Vagina (tissue), 2 donors: ENCODE measurements at regions of chr1 and their contacts with region 1.

Region 1: GRCh38 chr1:35451125-35451528 is 106.1 kb downstream of the KIAA0319L start:
- DNase-seq: no peak
- H3K4me3 ChIP-seq: no peak overlapping the region
- H3K27ac ChIP-seq: peak overlapping the region; percentile 76
- H3K4me1 ChIP-seq: peaks cover 48% of the 10 kb centered on the region
- H3K27me3 ChIP-seq: no peaks in the 10 kb centered on the region
- CTCF ChIP-seq: peak; percentile 76 to 91 (median 90)
- POLR2A ChIP-seq: no peak

Region 2: DNA sequence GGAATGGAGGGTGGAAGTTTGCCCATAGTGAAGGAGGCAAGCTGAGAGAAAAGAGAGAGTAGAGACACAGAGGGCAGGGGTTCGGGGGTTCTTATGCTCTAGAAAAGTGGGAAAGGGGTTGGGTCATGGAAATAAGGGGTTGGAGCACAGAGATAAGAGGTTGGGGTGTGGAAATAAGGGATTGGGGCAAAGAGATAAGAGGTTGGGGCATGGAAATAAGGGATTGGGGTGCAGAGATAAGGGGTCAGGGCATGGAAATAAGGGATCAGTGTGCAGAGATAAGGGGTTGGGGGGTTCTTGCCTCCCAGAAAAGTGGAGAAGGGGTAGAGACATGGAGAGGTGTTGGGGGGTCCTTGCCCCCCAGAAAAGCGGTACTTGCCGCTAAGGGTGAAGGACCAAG is 314.3 kb before region 1 on chr1:
- intact Hi-C with region 1: no loop called
- DNase-seq: no peak
- H3K4me3 ChIP-seq: no peak overlapping the region
- H3K27ac ChIP-seq: no peak overlapping the region
- H3K4me1 ChIP-seq: no peaks in the 10 kb centered on the region
- H3K27me3 ChIP-seq: no peaks in the 10 kb centered on the region
- CTCF ChIP-seq: no peak
- POLR2A ChIP-seq: no peak

Region 3: GRCh38 chr1:35726450-35727433 is 275.6 kb after region 1 on chr1:
- intact Hi-C with region 1: loop called (anchors 10 kb)
- DNase-seq: no peak
- H3K4me3 ChIP-seq: no peak overlapping the region
- H3K27ac ChIP-seq: no peak overlapping the region
- H3K4me1 ChIP-seq: no peaks in the 10 kb centered on the region
- H3K27me3 ChIP-seq: no peaks in the 10 kb centered on the region
- CTCF ChIP-seq: peak; percentile 71 to 77 (median 76)
- POLR2A ChIP-seq: no peak